Activated T-helper 1 cell treated with anti-CD3 and anti-CD28 coated beads, Interleukin-12 subunit alpha, Interleukin-12 subunit beta, Interleukin-2, Interleukin-4 antibody, amounts not matched to agents 30 ng/mL and 10 ng/mL and 1 ng/mL, durations not matched to agents 14 hours and 24 hours and 36 hours (primary cell): ENCODE measurements at regions of chr10 and their contacts with region 1.

Region 1: GRCh38 chr10:91190876-91191583 is 29.4 kb upstream of the PCGF5 start:
- DNase-seq: no peak
- H3K4me3 Mint-ChIP-seq: no peak overlapping the region
- H3K27ac Mint-ChIP-seq: no peak overlapping the region
- H3K4me1 Mint-ChIP-seq: peaks cover 61% of the 10 kb centered on the region
- H3K27me3 Mint-ChIP-seq: no peaks in the 10 kb centered on the region

Region 2: GRCh38 chr10:91201213-91201996 is 10.4 kb after region 1 on chr10:
- intact Hi-C with region 1: loop called (anchors 1 kb)
- DNase-seq: peak; percentile 47
- H3K4me3 Mint-ChIP-seq: peak overlapping the region; percentile 68
- H3K27ac Mint-ChIP-seq: peak overlapping the region; percentile 92
- H3K4me1 Mint-ChIP-seq: peaks cover 81% of the 10 kb centered on the region
- H3K27me3 Mint-ChIP-seq: no peaks in the 10 kb centered on the region

Region 3: GRCh38 chr10:91211675-91212074 is 20.6 kb after region 1 on chr10:
- intact Hi-C with region 1: no loop called
- DNase-seq: no peak
- H3K4me3 Mint-ChIP-seq: no peak overlapping the region
- H3K27ac Mint-ChIP-seq: no peak overlapping the region
- H3K4me1 Mint-ChIP-seq: peaks cover 36% of the 10 kb centered on the region
- H3K27me3 Mint-ChIP-seq: peaks cover 1% of the 10 kb centered on the region

Region 4: GRCh38 chr10:91227576-91227975 is 36.5 kb after region 1 on chr10:
- intact Hi-C with region 1: loop called (anchors 5 kb)
- DNase-seq: no peak
- H3K4me3 Mint-ChIP-seq: no peak overlapping the region
- H3K27ac Mint-ChIP-seq: no peak overlapping the region
- H3K4me1 Mint-ChIP-seq: peaks cover 47% of the 10 kb centered on the region
- H3K27me3 Mint-ChIP-seq: no peaks in the 10 kb centered on the region

Region 5: GRCh38 chr10:91251430-91252056 is 60.5 kb after region 1 on chr10:
- intact Hi-C with region 1: no loop called
- DNase-seq: peak; percentile 35
- H3K4me3 Mint-ChIP-seq: no peak overlapping the region
- H3K27ac Mint-ChIP-seq: no peak overlapping the region
- H3K4me1 Mint-ChIP-seq: peaks cover 5% of the 10 kb centered on the region
- H3K27me3 Mint-ChIP-seq: no peaks in the 10 kb centered on the region